Endothelial cell of umbilical vein (primary cell): ENCODE measurements at regions of chr1 and their contacts with region 1.

Region 1: DNA sequence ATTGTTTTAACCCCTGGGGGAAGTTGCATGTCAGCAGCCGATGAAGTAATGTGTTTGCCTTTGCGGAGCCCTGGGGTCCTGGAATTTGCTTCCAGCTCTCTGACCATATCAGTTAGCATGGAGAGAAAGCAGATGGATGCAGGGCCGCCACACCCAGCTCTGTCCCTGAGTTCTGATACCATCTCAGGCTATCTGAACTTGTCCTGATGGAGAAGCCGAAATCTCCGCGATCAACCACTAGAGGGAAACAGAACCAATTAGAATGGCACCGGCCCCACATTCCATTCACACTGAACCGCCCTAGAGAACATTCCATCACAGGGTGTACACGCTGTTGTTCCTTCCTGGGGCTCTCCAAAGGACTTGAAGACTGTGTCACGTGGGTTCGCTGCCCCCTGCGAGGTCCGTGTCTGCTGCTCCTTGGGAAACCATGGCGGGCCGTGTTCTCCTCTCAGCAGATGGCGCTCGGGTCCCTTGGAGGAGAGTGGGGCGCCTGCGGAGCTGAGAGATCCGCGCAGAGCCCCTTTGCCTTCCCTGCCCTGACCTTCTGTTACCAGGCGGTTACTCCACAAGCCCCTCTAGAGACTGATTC is 75.4 kb downstream of the ABCA4 start:
- DNase-seq: peak; percentile 97
- H3K4me3 ChIP-seq: no peak overlapping the region
- H3K27ac ChIP-seq: peak overlapping the region; percentile 89
- H3K4me1 ChIP-seq: peaks cover 65% of the 10 kb centered on the region
- H3K27me3 ChIP-seq: no peaks in the 10 kb centered on the region
- CTCF ChIP-seq: peak; percentile 66 to 89
- POLR2A ChIP-seq: peak; percentile 80

Region 2: DNA sequence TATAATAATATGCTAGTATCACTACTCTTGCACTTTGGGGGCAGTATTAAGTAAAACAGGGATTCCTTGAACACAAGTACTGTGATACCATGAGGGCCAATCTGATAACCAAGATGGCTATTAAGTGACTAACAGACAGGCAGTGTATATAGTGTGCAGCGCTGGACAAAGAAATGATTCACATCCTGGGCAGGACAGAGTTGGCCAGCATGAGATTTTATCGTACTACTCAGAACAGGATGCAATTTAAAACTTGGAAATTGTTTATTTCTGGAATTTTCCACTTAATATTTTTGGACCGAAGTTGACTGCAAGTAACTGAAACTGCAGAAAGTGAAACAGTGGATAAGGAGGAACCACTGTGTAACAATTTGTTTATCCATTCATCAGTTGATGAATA is 241.1 kb before region 1 on chr1:
- CTCF ChIA-PET with region 1: no interaction called
- POLR2A ChIA-PET with region 1: no interaction called
- dilution Hi-C with region 1: no loop called
- intact Hi-C with region 1: no loop called
- DNase-seq: peak; percentile 97
- H3K4me3 ChIP-seq: peak overlapping the region in 1 of 3 experiments; percentile 31
- H3K27ac ChIP-seq: peak overlapping the region; percentile 72
- H3K4me1 ChIP-seq: peaks cover 33% of the 10 kb centered on the region
- H3K27me3 ChIP-seq: no peaks in the 10 kb centered on the region
- CTCF ChIP-seq: no peak
- POLR2A ChIP-seq: peak; percentile 71

Region 3: DNA sequence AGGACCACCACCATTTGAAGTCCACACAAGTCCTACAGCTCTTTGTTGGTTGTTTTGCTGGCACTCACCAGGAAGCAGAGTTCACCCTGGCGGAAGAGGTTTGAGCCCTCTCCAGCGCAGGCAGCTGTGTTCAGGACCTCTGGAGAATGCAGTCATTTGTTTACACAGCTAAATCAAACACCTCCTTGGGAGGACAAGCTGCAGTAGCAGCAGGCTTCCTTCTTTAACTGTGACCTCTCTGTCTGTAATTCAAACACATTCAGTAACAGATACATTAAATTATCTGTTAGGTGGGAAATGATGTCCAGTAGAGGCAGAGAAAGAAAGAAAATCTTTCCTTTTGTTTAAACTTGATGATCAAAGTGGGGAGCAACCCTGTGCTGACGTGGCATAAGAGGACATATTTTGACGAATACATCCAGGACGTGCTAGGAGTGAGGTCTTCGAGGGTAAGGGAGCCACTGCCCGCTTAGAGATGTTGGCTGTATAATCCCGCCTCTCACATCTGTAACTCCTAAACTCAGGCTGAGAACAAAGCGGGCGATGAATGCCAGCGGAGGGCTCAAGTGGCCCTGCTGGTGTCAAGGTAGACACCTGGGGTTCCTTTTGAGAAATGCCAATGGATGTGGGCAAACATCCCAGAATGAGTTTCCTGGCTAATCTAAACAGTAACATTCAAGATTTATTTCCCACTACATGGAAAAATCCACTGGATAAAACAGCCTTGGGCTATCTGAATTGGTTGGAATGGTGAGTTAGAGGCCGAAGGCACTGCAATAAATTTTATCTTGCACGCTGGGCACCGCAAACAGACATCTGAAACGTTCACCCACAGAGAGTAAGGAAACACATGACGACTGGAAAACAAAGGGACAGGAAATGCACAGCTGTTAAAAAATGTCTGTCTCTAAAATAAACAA is 23.7 kb after region 1 on chr1:
- CTCF ChIA-PET with region 1: interaction called, 71 read pairs
- POLR2A ChIA-PET with region 1: interaction called, 8 read pairs
- dilution Hi-C with region 1: no loop called
- intact Hi-C with region 1: loop called (anchors 1 kb)
- DNase-seq: peak; percentile 98
- H3K4me3 ChIP-seq: no peak overlapping the region
- H3K27ac ChIP-seq: peak overlapping the region; percentile 100
- H3K4me1 ChIP-seq: peaks cover 77% of the 10 kb centered on the region
- H3K27me3 ChIP-seq: no peaks in the 10 kb centered on the region
- CTCF ChIP-seq: no peak
- POLR2A ChIP-seq: no peak

Region 4: DNA sequence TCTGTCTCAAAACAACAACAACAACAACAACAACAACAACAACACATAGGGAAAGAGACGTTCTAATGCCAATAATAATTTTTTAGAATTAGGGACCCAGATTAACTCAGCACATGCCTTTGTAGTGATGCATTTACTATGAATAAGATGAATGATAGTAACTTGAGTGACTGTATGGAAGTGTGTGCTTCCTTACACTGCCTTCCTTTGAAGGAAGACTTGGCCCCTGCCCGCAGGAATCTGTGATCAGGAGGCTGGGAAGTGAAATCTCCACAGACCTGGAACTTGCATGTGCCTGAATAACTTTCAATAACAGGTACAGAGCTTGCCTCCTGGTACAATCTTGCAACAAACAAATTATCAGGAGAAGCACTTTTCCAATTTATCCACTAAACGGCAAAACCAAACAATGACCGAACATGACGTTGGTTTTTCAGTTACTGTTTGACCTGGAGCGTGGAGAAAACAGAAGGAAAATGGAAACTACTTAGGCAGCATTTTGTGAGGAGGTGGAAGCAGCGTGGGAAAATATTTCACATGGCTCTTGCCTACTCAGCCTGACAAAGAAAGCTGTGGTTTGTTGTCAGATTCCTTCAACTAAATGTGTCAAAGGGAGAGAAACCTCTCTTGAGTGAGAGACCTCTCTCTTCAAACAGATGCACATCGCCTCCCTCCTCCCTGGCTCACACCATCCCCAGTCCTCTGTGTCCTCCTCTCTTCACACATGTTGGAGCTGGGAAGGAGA is 85.5 kb after region 1 on chr1:
- CTCF ChIA-PET with region 1: no interaction called
- POLR2A ChIA-PET with region 1: no interaction called
- dilution Hi-C with region 1: no loop called
- intact Hi-C with region 1: no loop called
- DNase-seq: no peak
- H3K4me3 ChIP-seq: no peak overlapping the region
- H3K27ac ChIP-seq: no peak overlapping the region
- H3K4me1 ChIP-seq: peaks cover 14% of the 10 kb centered on the region
- H3K27me3 ChIP-seq: no peaks in the 10 kb centered on the region
- CTCF ChIP-seq: no peak
- POLR2A ChIP-seq: no peak

Region 5: DNA sequence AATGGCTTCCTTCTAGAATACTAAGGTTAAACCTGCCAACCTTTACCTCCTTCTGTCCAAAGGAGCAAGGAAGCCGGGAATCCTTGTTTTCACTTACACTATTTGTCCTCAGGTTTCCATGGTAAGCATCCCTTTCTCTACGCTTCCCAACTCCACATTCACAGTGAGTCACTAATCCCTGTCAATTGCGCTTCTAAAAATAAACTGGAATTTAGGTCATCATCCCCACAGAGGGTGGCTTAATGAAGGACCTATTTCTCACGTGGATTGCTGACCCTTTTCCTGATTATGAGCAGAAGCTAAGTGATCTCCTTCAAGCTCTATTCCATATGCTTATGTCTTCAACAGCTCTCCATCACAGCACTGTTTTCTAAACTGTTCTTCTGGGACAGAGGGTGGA is 115.2 kb after region 1 on chr1:
- CTCF ChIA-PET with region 1: interaction called, 8 read pairs
- POLR2A ChIA-PET with region 1: no interaction called
- dilution Hi-C with region 1: no loop called
- intact Hi-C with region 1: loop called (anchors 1 kb)
- DNase-seq: peak; percentile 76
- H3K4me3 ChIP-seq: no peak overlapping the region
- H3K27ac ChIP-seq: peak overlapping the region; percentile 23
- H3K4me1 ChIP-seq: peaks cover 5% of the 10 kb centered on the region
- H3K27me3 ChIP-seq: no peaks in the 10 kb centered on the region
- CTCF ChIP-seq: no peak
- POLR2A ChIP-seq: no peak

Region 6: DNA sequence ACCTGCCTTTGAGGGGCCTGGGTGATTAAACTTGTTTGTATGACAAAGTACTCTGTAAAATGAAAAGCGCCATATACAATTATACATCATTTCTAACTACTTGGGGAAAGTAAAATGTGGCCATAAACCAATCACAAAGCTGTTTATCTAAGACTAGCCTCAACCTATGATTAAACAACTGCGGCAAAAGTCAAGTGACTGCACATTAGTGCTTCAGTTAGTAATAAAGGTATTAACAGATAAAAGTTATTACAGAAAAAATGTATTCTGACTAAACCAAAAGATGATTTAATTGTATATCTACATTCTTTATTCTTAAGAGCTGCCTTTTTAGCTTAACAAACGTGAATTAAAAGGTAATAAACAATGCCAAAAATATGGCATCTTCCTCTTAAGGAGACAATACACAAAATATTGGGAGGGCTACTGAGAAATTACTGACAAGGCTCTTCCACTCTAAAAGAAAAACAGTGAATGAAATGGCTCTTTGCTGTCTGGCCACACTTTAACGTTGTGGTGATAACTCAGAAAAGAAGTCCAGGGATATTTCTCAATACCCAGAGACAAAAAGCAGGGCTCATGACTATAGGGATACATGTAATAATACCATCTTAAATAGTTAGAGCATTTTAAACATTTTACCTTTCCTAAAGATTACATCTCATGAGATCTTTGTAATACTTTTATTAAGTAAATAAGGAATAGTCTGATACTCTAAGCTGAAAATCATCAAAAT is 183.2 kb after region 1 on chr1:
- CTCF ChIA-PET with region 1: interaction called, 10 read pairs
- POLR2A ChIA-PET with region 1: no interaction called
- dilution Hi-C with region 1: no loop called
- intact Hi-C with region 1: no loop called
- DNase-seq: no peak
- H3K4me3 ChIP-seq: peak overlapping the region in 1 of 3 experiments; percentile 12
- H3K27ac ChIP-seq: no peak overlapping the region
- H3K4me1 ChIP-seq: peaks cover 71% of the 10 kb centered on the region
- H3K27me3 ChIP-seq: no peaks in the 10 kb centered on the region
- CTCF ChIP-seq: no peak
- POLR2A ChIP-seq: no peak

Region 7: GRCh38 chr1:94247138-94248094 is 201.9 kb after region 1 on chr1:
- CTCF ChIA-PET with region 1: interaction called, 10 read pairs
- POLR2A ChIA-PET with region 1: interaction called, 3 read pairs
- dilution Hi-C with region 1: no loop called
- intact Hi-C with region 1: no loop called
- DNase-seq: peak; percentile 80
- H3K4me3 ChIP-seq: peak overlapping the region; percentile 58 to 98 (median 75)
- H3K27ac ChIP-seq: peak overlapping the region; percentile 90
- H3K4me1 ChIP-seq: peaks cover 23% of the 10 kb centered on the region
- H3K27me3 ChIP-seq: no peaks in the 10 kb centered on the region
- CTCF ChIP-seq: no peak
- POLR2A ChIP-seq: peak; percentile 95